ENCODE measurements at regions of chr2 and their contacts with region 1.

Region 1: GRCh38 chr2:105287692-105288091 is 41.8 kb downstream of the TGFBRAP1 start:
- DNase-seq: peak; percentile 53
- H3K4me3 Mint-ChIP-seq: no peak overlapping the region
- H3K27ac Mint-ChIP-seq: no peak overlapping the region
- H3K4me1 Mint-ChIP-seq: peaks cover 1% of the 10 kb centered on the region
- H3K27me3 Mint-ChIP-seq: no peaks in the 10 kb centered on the region

Region 2: GRCh38 chr2:104755026-104755878 is 532.4 kb before region 1 on chr2:
- CTCF ChIA-PET with region 1: no interaction called
- POLR2A ChIA-PET with region 1: no interaction called
- intact Hi-C with region 1: no loop called
- DNase-seq: no peak
- H3K4me3 Mint-ChIP-seq: no peak overlapping the region
- H3K27ac Mint-ChIP-seq: no peak overlapping the region
- H3K4me1 Mint-ChIP-seq: no peaks in the 10 kb centered on the region
- H3K27me3 Mint-ChIP-seq: peaks cover 3% of the 10 kb centered on the region

Region 3: GRCh38 chr2:105329561-105330495 is 42.1 kb after region 1 on chr2 and contains the start of gene TGFBRAP1:
- CTCF ChIA-PET with region 1: no interaction called
- POLR2A ChIA-PET with region 1: no interaction called
- intact Hi-C with region 1: loop called (anchors 2 kb)
- DNase-seq: peak; percentile 58
- H3K4me3 Mint-ChIP-seq: peak within 1 kb of the TSS; percentile 97
- H3K27ac Mint-ChIP-seq: peak within 1 kb of the TSS; percentile 91
- H3K4me1 Mint-ChIP-seq: peaks cover 31% of the 10 kb centered on the region
- H3K27me3 Mint-ChIP-seq: no peaks in the 10 kb centered on the region
- total RNA-seq, gene TGFBRAP1: 16.8 to 16.9 TPM

Region 4: GRCh38 chr2:106147159-106147558 is 859.5 kb after region 1 on chr2:
- CTCF ChIA-PET with region 1: no interaction called
- POLR2A ChIA-PET with region 1: no interaction called
- intact Hi-C with region 1: no loop called
- DNase-seq: no peak
- H3K4me3 Mint-ChIP-seq: no peak overlapping the region
- H3K27ac Mint-ChIP-seq: peak overlapping the region; percentile 85
- H3K4me1 Mint-ChIP-seq: peaks cover 51% of the 10 kb centered on the region
- H3K27me3 Mint-ChIP-seq: no peaks in the 10 kb centered on the region